Activated T-helper 2 cell treated with anti-CD3 and anti-CD28 coated beads, Interferon-gamma antibody, Interleukin-2, Interleukin-4, amounts not matched to agents 10 μg/mL and 5 μg/mL and 100 μg/mL, durations not matched to agents 14 hours and 24 hours and 36 hours (primary cell): ENCODE measurements at regions of chr15 and their contacts with region 1.

Region 1: GRCh38 chr15:89278307-89278706 is 34.5 kb downstream of the FANCI start:
- DNase-seq: no peak
- H3K4me3 Mint-ChIP-seq: no peak overlapping the region
- H3K27ac Mint-ChIP-seq: no peak overlapping the region
- H3K4me1 Mint-ChIP-seq: peaks cover 7% of the 10 kb centered on the region
- H3K27me3 Mint-ChIP-seq: no peaks in the 10 kb centered on the region

Region 2: DNA sequence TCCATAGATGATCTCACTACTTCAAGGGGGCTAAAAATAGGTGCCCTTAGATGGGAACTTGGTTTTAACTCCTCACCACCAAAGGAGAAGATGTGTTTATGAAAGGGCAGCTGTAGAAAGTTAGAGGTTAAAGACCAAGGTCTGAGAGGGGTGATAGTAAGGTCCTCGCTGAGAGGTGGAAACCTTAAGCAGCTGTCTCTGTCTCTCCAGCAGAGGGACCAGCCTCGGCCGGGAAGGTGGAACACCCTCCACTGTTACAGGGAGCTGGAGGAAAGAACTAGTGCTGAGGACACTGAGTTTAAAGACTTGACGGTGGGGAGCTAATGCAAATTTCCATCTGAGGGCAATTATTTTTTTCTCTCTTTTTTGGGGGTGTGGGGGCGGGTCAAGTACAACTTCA is 48.0 kb before region 1 on chr15:
- intact Hi-C with region 1: no loop called
- DNase-seq: no peak
- H3K4me3 Mint-ChIP-seq: no peak overlapping the region
- H3K27ac Mint-ChIP-seq: no peak overlapping the region
- H3K4me1 Mint-ChIP-seq: peaks cover 5% of the 10 kb centered on the region
- H3K27me3 Mint-ChIP-seq: peaks cover 14% of the 10 kb centered on the region

Region 3: DNA sequence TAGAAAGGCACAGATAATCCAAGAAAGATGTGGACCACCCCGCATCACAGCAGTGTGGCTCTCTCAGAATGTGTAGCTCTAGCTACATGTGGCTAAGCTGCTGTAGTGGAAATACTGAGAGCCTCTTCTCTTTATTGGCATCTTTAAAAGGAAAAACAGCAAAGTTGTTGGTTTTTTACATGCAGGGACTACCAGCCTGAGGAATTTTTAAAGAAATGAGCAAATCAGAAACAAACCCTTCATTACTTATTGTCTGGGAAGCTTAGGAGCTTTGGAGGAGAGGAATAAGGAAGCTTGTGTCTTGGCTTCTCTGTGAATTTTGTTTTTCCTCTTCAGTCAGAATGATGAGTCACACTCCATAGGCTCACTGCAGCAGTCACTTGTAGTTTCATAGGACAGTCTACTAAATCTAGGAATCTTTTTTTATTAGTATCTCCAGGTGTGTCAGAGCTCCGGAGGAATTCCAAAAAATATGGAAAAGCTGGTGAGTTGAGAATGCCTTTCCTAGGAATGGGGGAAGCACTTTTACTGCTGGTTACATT is 28.8 kb after region 1 on chr15:
- intact Hi-C with region 1: loop called (anchors 5 kb)
- DNase-seq: no peak
- H3K4me3 Mint-ChIP-seq: no peak overlapping the region
- H3K27ac Mint-ChIP-seq: no peak overlapping the region
- H3K4me1 Mint-ChIP-seq: peaks cover 15% of the 10 kb centered on the region
- H3K27me3 Mint-ChIP-seq: no peaks in the 10 kb centered on the region